HCT116 (cell line): ENCODE measurements at regions of chr6 and their contacts with region 1.

Region 1: DNA sequence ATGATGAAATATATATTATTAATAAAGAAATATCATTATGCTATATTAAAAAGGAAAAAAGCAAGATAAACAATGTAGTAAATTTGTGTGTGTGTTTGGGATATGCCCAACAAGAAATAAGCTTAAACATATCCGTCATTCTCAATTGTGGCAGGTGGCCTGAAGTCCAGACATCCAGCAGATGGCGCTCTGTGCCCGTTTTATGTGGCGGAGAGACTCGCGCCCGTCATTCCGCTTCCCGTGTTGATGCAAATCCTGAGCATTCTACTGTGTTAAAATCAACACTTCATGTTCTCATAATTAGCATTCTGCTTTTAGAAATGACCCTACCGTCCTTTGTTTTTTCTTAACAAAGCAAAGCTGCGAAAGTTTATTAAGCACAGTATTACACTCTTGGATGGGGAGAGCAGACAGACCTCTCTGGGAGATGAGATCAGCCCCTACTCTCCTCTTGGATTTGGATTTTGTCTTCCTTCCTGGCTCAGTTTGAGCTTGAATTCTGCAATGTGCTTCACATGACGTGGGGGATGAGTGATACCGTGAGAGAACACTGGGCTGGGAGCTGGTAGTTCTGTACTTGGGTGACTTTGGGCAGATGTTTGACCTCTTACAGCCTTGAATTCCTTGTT is 125.8 kb downstream of the MCHR2 start:
- DNase-seq: peak; percentile 51
- ATAC-seq: peak; percentile 94
- H3K4me3 ChIP-seq: peak overlapping the region; percentile 9 to 23; a peak in 2 of 4 replicates
- H3K27ac ChIP-seq: no peak overlapping the region
- H3K4me1 ChIP-seq: peaks cover 0 to 4% of the 10 kb centered on the region in 2 experiments; a peak in 1 of 4 replicates
- H3K27me3 ChIP-seq: no peaks in the 10 kb centered on the region
- CTCF ChIP-seq: peak; percentile 74 to 90 (median 78)
- POLR2A ChIP-seq: no peak
- RAD21 ChIP-seq: peak; percentile 90

Region 2: DNA sequence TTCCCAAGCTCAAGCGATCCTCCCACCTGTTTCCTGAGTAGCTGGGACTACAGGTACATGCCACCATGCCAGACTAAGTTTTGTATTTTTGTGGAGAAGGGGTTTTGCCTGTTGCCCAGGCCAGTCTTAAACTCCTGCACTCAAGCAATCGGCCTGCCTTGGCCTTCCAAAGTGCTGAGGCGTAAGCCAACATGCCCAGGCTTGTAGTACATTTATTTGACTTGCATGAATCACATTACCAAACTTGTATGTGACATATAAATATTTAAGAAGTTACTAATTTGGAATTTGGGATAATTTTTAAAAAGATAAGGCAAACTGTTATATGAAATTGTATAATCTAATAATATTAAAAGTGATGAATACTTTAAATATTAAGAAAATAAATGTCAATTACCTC is 31.7 kb before region 1 on chr6:
- CTCF ChIA-PET with region 1: no interaction called
- POLR2A ChIA-PET with region 1: no interaction called
- RAD21 ChIA-PET with region 1: no interaction called
- intact Hi-C with region 1: no loop called
- DNase-seq: no peak
- ATAC-seq: no peak
- H3K4me3 ChIP-seq: no peak overlapping the region
- H3K27ac ChIP-seq: no peak overlapping the region
- H3K4me1 ChIP-seq: peaks cover 2 to 3% of the 10 kb centered on the region in 2 experiments; a peak in 1 of 4 replicates
- H3K27me3 ChIP-seq: no peaks in the 10 kb centered on the region
- CTCF ChIP-seq: no peak
- POLR2A ChIP-seq: no peak
- RAD21 ChIP-seq: no peak

Region 3: DNA sequence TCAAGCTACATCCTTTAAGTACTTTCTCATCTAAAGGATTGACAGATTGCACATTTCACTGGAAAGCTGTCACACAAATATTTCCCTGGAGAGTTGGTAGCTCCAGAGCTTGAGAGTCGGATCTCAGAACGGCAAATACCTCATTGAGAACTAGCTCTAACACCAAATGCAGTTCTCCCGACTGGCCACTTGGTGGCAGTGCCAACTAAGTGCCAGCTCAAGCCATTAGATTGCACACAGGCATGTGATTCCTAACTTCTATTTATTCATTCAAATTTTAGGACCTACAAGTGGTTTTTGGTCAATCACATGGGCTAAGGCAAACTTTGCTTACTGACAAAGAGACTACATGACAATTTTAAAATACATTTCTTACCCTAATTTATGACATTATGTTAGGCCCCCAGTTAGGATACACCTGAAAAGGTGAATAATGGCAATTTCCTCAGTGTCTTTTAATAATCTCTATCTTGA is 133.8 kb after region 1 on chr6:
- CTCF ChIA-PET with region 1: interaction called, 10 read pairs
- POLR2A ChIA-PET with region 1: no interaction called
- RAD21 ChIA-PET with region 1: interaction called in 1 of 2 experiments, 3 read pairs
- intact Hi-C with region 1: no loop called
- DNase-seq: peak; percentile 29
- ATAC-seq: peak; percentile 89
- H3K4me3 ChIP-seq: no peak overlapping the region
- H3K27ac ChIP-seq: no peak overlapping the region
- H3K4me1 ChIP-seq: no peaks in the 10 kb centered on the region
- H3K27me3 ChIP-seq: no peaks in the 10 kb centered on the region
- CTCF ChIP-seq: peak; percentile 66 to 93 (median 90); a peak in 5 of 6 replicates
- POLR2A ChIP-seq: no peak
- RAD21 ChIP-seq: peak; percentile 81

Region 4: DNA sequence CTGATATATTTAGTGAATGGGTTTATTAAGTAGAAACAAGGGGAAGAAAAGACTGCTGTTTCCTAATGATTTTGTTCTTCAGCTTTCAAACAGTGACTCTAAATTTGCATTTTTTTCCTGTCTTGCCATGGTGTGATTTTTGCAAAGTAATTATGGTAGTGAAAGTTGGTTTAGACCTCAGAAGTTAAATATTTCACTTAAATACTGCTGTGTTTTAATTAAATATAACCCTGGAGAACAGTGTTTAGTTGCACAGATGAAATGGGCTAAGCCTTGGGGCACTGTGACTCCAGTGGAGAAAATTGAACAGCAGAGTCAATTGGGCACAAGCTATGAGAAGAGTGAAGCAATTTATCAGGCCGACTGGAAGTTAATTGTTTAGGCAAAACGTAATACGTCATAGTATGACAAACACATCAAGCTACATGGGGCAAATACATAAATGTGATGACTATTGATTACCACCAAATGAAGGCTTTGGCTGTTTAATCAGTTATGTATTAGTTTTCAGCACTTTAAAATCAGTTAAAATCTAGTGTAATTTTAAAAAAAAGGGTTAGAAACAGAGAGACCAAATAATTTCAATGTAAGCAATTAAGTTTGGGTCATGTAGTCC is 237.1 kb after region 1 on chr6:
- CTCF ChIA-PET with region 1: interaction called, 88 read pairs
- POLR2A ChIA-PET with region 1: no interaction called
- RAD21 ChIA-PET with region 1: interaction called, 5 to 6 read pairs
- intact Hi-C with region 1: no loop called
- DNase-seq: no peak
- ATAC-seq: no peak
- H3K4me3 ChIP-seq: no peak overlapping the region
- H3K27ac ChIP-seq: no peak overlapping the region
- H3K4me1 ChIP-seq: no peaks in the 10 kb centered on the region
- H3K27me3 ChIP-seq: no peaks in the 10 kb centered on the region
- CTCF ChIP-seq: no peak
- POLR2A ChIP-seq: no peak
- RAD21 ChIP-seq: no peak

Region 5: GRCh38 chr6:100664274-100665040 is 796.3 kb after region 1 on chr6:
- CTCF ChIA-PET with region 1: interaction called, 11 read pairs
- POLR2A ChIA-PET with region 1: no interaction called
- RAD21 ChIA-PET with region 1: no interaction called
- intact Hi-C with region 1: loop called (anchors 2 kb)
- DNase-seq: no peak
- ATAC-seq: no peak
- H3K4me3 ChIP-seq: no peak overlapping the region
- H3K27ac ChIP-seq: no peak overlapping the region
- H3K4me1 ChIP-seq: peaks cover 0 to 8% of the 10 kb centered on the region in 2 experiments; a peak in 1 of 4 replicates
- H3K27me3 ChIP-seq: no peaks in the 10 kb centered on the region
- CTCF ChIP-seq: peak; percentile 40 to 52 (median 42); a peak in 5 of 6 replicates
- POLR2A ChIP-seq: no peak
- RAD21 ChIP-seq: peak; percentile 53; the same call in 1 of the 2 replicates